ENCODE measurements at regions of chr3 and their contacts with region 1.

Region 1: GRCh38 chr3:180961087-180961486 is 28.4 kb downstream of the DNAJC19 start:
- DNase-seq: no peak
- ATAC-seq: no peak
- H3K4me3 ChIP-seq: no peak overlapping the region
- H3K4me3 Mint-ChIP-seq: no peak overlapping the region
- H3K27ac ChIP-seq: peak overlapping the region; percentile 1
- H3K27ac Mint-ChIP-seq: no peak overlapping the region
- H3K4me1 ChIP-seq: no peaks in the 10 kb centered on the region
- H3K4me1 Mint-ChIP-seq: peaks cover 0 to 13% (median 3%) of the 10 kb centered on the region in 7 donors
- H3K27me3 ChIP-seq: no peaks in the 10 kb centered on the region
- H3K27me3 Mint-ChIP-seq: no peaks in the 10 kb centered on the region

Region 2: GRCh38 chr3:180947761-180948633 is 13.1 kb before region 1 on chr3:
- CTCF ChIA-PET with region 1: no interaction called
- POLR2A ChIA-PET with region 1: no interaction called
- intact Hi-C with region 1: loop called in 1 of 2 experiments (anchors 2 kb)
- DNase-seq: no peak
- ATAC-seq: no peak
- H3K4me3 ChIP-seq: no peak overlapping the region
- H3K4me3 Mint-ChIP-seq: no peak overlapping the region
- H3K27ac ChIP-seq: no peak overlapping the region
- H3K27ac Mint-ChIP-seq: peak overlapping the region in 2 of 9 donors; percentile 32 to 49
- H3K4me1 ChIP-seq: no peaks in the 10 kb centered on the region
- H3K4me1 Mint-ChIP-seq: peaks cover 6 to 30% (median 16%) of the 10 kb centered on the region in 7 donors
- H3K27me3 ChIP-seq: no peaks in the 10 kb centered on the region
- H3K27me3 Mint-ChIP-seq: no peaks in the 10 kb centered on the region

Region 3: GRCh38 chr3:180980611-180981010 is 19.5 kb after region 1 on chr3:
- CTCF ChIA-PET with region 1: no interaction called
- POLR2A ChIA-PET with region 1: no interaction called
- intact Hi-C with region 1: loop called in 1 of 2 experiments (anchors 2 kb)
- DNase-seq: no peak
- ATAC-seq: no peak
- H3K4me3 ChIP-seq: no peak overlapping the region
- H3K4me3 Mint-ChIP-seq: no peak overlapping the region
- H3K27ac ChIP-seq: no peak overlapping the region
- H3K27ac Mint-ChIP-seq: peak overlapping the region in 5 of 9 donors; percentile 36 to 82 (median 59)
- H3K4me1 ChIP-seq: no peaks in the 10 kb centered on the region
- H3K4me1 Mint-ChIP-seq: peaks cover 0 to 19% (median 6%) of the 10 kb centered on the region in 7 donors
- H3K27me3 ChIP-seq: no peaks in the 10 kb centered on the region
- H3K27me3 Mint-ChIP-seq: no peaks in the 10 kb centered on the region

Measured in naive thymus-derived CD4-positive, alpha-beta T cell (primary cell).